MCF 10A (cell line): ENCODE measurements at regions of chr20 and their contacts with region 1.

Region 1: GRCh38 chr20:31494131-31494530 is 19.0 kb downstream of the REM1 start:
- DNase-seq: peak; percentile 62
- H3K4me3 Mint-ChIP-seq: no peak overlapping the region
- H3K27ac Mint-ChIP-seq: no peak overlapping the region
- H3K4me1 Mint-ChIP-seq: no peaks in the 10 kb centered on the region
- H3K27me3 Mint-ChIP-seq: peaks cover 24% of the 10 kb centered on the region
- CTCF ChIP-seq: peak; percentile 18

Region 2: DNA sequence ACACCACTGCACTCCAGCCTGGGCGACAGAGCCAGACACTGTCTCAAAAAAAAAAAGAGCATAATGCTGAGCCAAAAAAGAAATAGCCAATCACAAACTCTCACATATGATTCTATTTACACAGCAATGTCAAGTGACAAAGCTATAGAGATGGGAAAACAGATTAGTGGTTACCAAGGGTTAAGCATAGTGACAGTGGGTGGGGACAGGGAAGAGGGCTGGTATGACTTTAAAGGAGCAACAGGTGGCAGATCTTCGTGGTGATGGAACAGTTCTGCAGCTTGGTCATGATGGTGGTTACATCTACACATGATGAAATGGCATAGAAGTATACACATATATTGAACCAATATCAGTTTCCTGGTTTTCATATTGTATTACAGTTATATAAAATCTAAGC is 112.4 kb before region 1 on chr20:
- CTCF ChIA-PET with region 1: no interaction called
- POLR2A ChIA-PET with region 1: no interaction called
- intact Hi-C with region 1: no loop called
- DNase-seq: no peak
- H3K4me3 Mint-ChIP-seq: no peak overlapping the region
- H3K27ac Mint-ChIP-seq: no peak overlapping the region
- H3K4me1 Mint-ChIP-seq: no peaks in the 10 kb centered on the region
- H3K27me3 Mint-ChIP-seq: peaks cover 61% of the 10 kb centered on the region
- CTCF ChIP-seq: no peak

Region 3: GRCh38 chr20:31474097-31474436 is 20.1 kb before region 1 on chr20:
- CTCF ChIA-PET with region 1: interaction called, 225 read pairs
- POLR2A ChIA-PET with region 1: no interaction called
- intact Hi-C with region 1: no loop called
- DNase-seq: no peak
- H3K4me3 Mint-ChIP-seq: no peak overlapping the region
- H3K27ac Mint-ChIP-seq: no peak overlapping the region
- H3K4me1 Mint-ChIP-seq: peaks cover 15% of the 10 kb centered on the region
- H3K27me3 Mint-ChIP-seq: no peaks in the 10 kb centered on the region
- CTCF ChIP-seq: no peak